Heart left ventricle (tissue), 16 donors: ENCODE measurements at regions of chr3 and their contacts with region 1.

Region 1: GRCh38 chr3:79497447-79498111 is 270.2 kb downstream of the ROBO1 start:
- DNase-seq: no peak
- ATAC-seq: no peak
- H3K4me3 ChIP-seq: no peak overlapping the region
- H3K27ac ChIP-seq: no peak overlapping the region
- H3K4me1 ChIP-seq: no peaks in the 10 kb centered on the region
- H3K27me3 ChIP-seq: no peaks in the 10 kb centered on the region
- CTCF ChIP-seq: peak; percentile 37 to 69 (median 56)
- POLR2A ChIP-seq: no peak

Region 2: DNA sequence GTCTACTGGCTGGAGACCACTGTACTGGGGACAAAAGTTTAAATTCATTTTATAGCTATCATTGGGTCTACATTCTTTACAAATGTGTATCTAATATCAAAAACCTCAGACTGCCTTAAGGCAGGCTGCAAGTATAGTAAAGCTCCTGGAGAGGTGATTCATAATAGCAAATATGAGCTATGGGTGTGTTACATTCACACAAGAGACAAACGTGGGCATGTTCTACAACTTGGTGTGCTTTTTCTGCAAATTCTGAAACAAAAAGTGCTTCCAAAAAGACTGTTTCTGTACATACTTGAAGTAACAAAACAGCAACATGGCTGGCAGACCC is 831.1 kb before region 1 on chr3:
- intact Hi-C with region 1: loop called in 5 of 10 experiments (anchors 5 to 10 kb)
- DNase-seq: no peak
- ATAC-seq: no peak
- H3K4me3 ChIP-seq: no peak overlapping the region
- H3K27ac ChIP-seq: no peak overlapping the region
- H3K4me1 ChIP-seq: no peaks in the 10 kb centered on the region
- H3K27me3 ChIP-seq: no peaks in the 10 kb centered on the region
- CTCF ChIP-seq: no peak
- POLR2A ChIP-seq: no peak

Region 3: GRCh38 chr3:79086514-79086913 is 411.1 kb before region 1 on chr3:
- intact Hi-C with region 1: loop called in 2 of 10 experiments (anchors 5 to 10 kb)
- DNase-seq: peak in 3 of 5 donors; percentile 6 to 21 (median 20)
- ATAC-seq: no peak
- H3K4me3 ChIP-seq: no peak overlapping the region
- H3K27ac ChIP-seq: no peak overlapping the region
- H3K4me1 ChIP-seq: no peaks in the 10 kb centered on the region
- H3K27me3 ChIP-seq: no peaks in the 10 kb centered on the region
- CTCF ChIP-seq: peak; percentile 47 to 77 (median 64)
- POLR2A ChIP-seq: no peak

Region 4: GRCh38 chr3:79751703-79752102 is 254.1 kb after region 1 on chr3:
- intact Hi-C with region 1: no loop called
- DNase-seq: no peak
- ATAC-seq: no peak
- H3K4me3 ChIP-seq: no peak overlapping the region
- H3K27ac ChIP-seq: no peak overlapping the region
- H3K4me1 ChIP-seq: no peaks in the 10 kb centered on the region
- H3K27me3 ChIP-seq: no peaks in the 10 kb centered on the region
- CTCF ChIP-seq: no peak
- POLR2A ChIP-seq: no peak